ENCODE measurements at regions of chr19 and their contacts with region 1.

Region 1: GRCh38 chr19:796692-797527 is at the start of gene PTBP1:
- DNase-seq: peak; percentile 97
- ATAC-seq: peak; percentile 86
- H3K4me3 Mint-ChIP-seq: peak within 1 kb of the TSS; percentile 89
- H3K27ac Mint-ChIP-seq: peak within 1 kb of the TSS; percentile 79
- H3K4me1 Mint-ChIP-seq: peaks cover 34% of the 10 kb centered on the region
- H3K27me3 Mint-ChIP-seq: peaks cover under 1% of the 10 kb centered on the region
- CTCF ChIP-seq: no peak
- total RNA-seq, gene PTBP1: 404 and 417 TPM in 2 replicates

Region 2: DNA sequence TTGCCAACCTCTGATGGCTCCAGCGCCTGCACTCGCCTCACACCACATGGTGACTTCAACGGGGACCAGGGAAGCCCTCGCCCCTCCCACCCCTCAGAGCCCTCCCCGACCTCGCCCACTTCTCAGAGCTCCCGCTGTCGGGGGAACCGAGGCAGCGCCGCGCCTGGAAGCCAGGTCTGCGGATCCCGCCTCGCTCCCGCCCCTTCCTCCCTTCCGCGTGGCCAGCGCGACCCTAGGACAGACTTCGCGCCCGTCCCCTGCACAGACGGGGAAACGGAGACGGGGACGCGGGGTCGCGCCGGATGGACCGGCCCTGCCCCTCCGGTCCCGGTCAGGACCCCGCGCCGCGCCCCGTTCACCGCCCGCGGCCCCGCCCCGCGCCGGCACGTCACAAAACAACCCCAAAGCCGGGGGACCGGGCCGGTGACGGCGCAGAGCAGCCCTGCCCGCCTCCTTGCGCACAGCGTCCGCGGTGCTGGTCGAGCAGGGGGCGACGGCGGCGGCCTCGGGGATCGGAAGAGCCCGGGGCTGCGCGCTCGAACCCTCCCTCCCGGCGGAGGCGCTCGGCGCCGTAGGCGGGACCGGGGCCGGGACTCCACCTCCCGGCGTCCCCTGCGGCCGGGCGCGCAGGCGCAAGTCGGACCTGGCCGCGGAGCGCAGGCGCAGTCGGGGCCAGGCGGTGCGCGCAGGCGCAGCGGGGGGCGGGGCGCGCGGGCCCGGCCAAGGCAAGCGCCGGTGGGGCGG is 265.7 kb before region 1 on chr19:
- CTCF ChIA-PET with region 1: no interaction called
- POLR2A ChIA-PET with region 1: no interaction called
- intact Hi-C with region 1: loop called (anchors 2 kb)
- DNase-seq: peak; percentile 99
- ATAC-seq: peak; percentile 81
- H3K4me3 Mint-ChIP-seq: peak overlapping the region; percentile 85
- H3K27ac Mint-ChIP-seq: peak overlapping the region; percentile 77
- H3K4me1 Mint-ChIP-seq: peaks cover 18% of the 10 kb centered on the region
- H3K27me3 Mint-ChIP-seq: peaks cover 1% of the 10 kb centered on the region
- CTCF ChIP-seq: no peak

Region 3: GRCh38 chr19:662962-663681 is 133.8 kb before region 1 on chr19 and contains the start of gene RNF126:
- CTCF ChIA-PET with region 1: no interaction called
- POLR2A ChIA-PET with region 1: no interaction called
- intact Hi-C with region 1: loop called (anchors 1 kb)
- DNase-seq: peak; percentile 90
- ATAC-seq: peak; percentile 67
- H3K4me3 Mint-ChIP-seq: peak within 1 kb of the TSS; percentile 95
- H3K27ac Mint-ChIP-seq: peak within 1 kb of the TSS; percentile 96
- H3K4me1 Mint-ChIP-seq: peaks cover 46% of the 10 kb centered on the region
- H3K27me3 Mint-ChIP-seq: no peaks in the 10 kb centered on the region
- CTCF ChIP-seq: no peak
- total RNA-seq, gene RNF126: 75.9 and 82.7 TPM in 2 replicates

Region 4: GRCh38 chr19:860481-861101 is 63.7 kb after region 1 on chr19:
- CTCF ChIA-PET with region 1: interaction called, 5 read pairs
- POLR2A ChIA-PET with region 1: no interaction called
- intact Hi-C with region 1: loop called (anchors 2 kb)
- DNase-seq: peak; percentile 63
- ATAC-seq: peak; percentile 51
- H3K4me3 Mint-ChIP-seq: peak overlapping the region; percentile 28
- H3K27ac Mint-ChIP-seq: no peak overlapping the region
- H3K4me1 Mint-ChIP-seq: peaks cover 19% of the 10 kb centered on the region
- H3K27me3 Mint-ChIP-seq: peaks cover 8% of the 10 kb centered on the region
- CTCF ChIP-seq: no peak

Region 5: DNA sequence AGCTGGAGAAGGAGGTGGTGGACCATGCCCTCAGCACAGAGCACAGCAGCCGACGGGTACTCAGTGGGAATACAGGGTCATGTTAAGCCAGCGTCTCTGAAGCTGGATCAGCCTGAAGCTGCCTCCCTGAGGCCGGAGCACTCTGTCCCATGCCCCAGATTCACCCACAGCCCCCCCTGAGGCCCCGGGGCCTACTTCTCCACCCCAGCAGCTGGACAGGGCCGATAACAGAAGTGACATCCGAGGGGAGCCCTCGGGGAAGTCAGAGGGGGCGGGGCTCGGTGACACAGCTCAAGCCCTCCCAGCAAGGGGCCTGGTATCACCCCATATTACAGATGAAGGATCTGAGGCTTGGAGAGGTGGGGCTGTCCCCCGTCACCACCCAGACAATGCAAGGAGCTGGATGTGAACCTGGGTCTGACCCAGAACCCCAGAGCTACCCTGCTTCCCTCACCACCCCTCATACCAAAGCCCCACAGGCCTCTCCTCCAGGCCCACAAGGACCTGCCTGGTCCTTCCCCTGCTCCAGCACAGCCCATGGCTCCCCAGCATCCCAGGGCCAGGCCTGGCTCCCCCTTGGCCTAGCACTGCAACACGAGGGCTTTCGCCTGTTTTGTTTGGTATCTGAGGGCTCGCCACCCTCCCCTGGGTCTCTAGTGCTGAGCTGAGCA is 110.4 kb after region 1 on chr19:
- CTCF ChIA-PET with region 1: no interaction called
- POLR2A ChIA-PET with region 1: interaction called, 6 read pairs
- intact Hi-C with region 1: loop called (anchors 5 kb)
- DNase-seq: peak; percentile 70
- ATAC-seq: peak; percentile 49
- H3K4me3 Mint-ChIP-seq: peak overlapping the region; percentile 80
- H3K27ac Mint-ChIP-seq: peak overlapping the region; percentile 99
- H3K4me1 Mint-ChIP-seq: peaks cover 73% of the 10 kb centered on the region
- H3K27me3 Mint-ChIP-seq: no peaks in the 10 kb centered on the region
- CTCF ChIP-seq: no peak

Region 6: GRCh38 chr19:1241417-1242095 is 444.6 kb after region 1 on chr19 and contains the start of gene ATP5F1D:
- CTCF ChIA-PET with region 1: no interaction called
- POLR2A ChIA-PET with region 1: no interaction called
- intact Hi-C with region 1: loop called (anchors 1 kb)
- DNase-seq: peak; percentile 85
- ATAC-seq: peak; percentile 67
- H3K4me3 Mint-ChIP-seq: peak within 1 kb of the TSS; percentile 86
- H3K27ac Mint-ChIP-seq: peak within 1 kb of the TSS; percentile 74
- H3K4me1 Mint-ChIP-seq: peaks cover 53% of the 10 kb centered on the region
- H3K27me3 Mint-ChIP-seq: peaks cover 7% of the 10 kb centered on the region
- CTCF ChIP-seq: no peak
- total RNA-seq, gene ATP5F1D: 172 and 185 TPM in 2 replicates

Region 7: DNA sequence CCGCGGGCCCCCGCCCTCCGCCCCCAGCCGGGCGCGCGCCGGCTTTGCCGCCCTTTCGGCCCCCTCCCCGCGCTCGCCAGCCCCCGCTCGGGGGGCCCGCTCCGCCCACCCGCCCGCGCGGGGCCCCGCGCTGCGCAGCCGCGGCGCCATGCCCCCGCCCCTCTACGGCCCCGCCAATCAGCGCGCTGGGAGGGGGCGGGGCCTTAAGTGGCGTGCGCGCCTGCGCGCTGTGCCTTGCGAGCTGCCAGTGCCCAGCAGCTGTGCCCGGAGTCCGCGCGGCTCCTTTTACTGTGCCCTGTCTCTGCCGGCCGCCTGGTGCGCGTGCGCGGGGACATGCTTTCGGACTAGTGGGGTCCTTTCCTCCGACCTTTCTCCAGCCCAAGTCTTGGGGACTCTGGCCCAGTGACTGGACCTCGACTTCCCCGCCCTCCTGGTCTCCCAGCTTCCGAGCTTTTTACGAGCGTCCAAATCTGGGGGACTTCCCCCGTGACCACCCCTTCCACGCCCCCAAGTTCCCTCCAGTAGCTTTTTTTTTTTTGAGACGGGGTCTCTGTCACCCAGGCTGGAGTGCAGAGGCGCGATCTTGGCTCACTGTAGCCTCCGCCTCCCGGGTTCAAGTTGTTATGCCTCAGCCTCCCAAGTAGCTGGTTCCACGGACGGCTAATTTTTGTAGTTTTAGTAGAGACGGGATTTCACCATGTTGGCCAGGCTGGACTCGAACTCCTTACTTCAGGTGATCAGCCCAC is 796.0 kb after region 1 on chr19 and contains the start of gene MBD3:
- CTCF ChIA-PET with region 1: no interaction called
- POLR2A ChIA-PET with region 1: no interaction called
- intact Hi-C with region 1: loop called (anchors 5 kb)
- DNase-seq: peak; percentile 89
- ATAC-seq: peak; percentile 84
- H3K4me3 Mint-ChIP-seq: peak within 1 kb of the TSS; percentile 90
- H3K27ac Mint-ChIP-seq: peak within 1 kb of the TSS; percentile 89
- H3K4me1 Mint-ChIP-seq: peaks cover 33% of the 10 kb centered on the region
- H3K27me3 Mint-ChIP-seq: no peaks in the 10 kb centered on the region
- CTCF ChIP-seq: no peak
- total RNA-seq, gene MBD3: 91.9 and 96.9 TPM in 2 replicates